PC-3 (cell line): ENCODE measurements at regions of chr14 and their contacts with region 1.

Region 1: GRCh38 chr14:61213191-61213621 is 67.9 kb downstream of the TMEM30B start:
- DNase-seq: peak; percentile 59
- ATAC-seq: no peak
- H3K4me3 ChIP-seq: no peak overlapping the region
- H3K27ac ChIP-seq: no peak overlapping the region
- H3K4me1 ChIP-seq: peaks cover 16% of the 10 kb centered on the region
- H3K27me3 ChIP-seq: no peaks in the 10 kb centered on the region
- CTCF ChIP-seq: no peak

Region 2: DNA sequence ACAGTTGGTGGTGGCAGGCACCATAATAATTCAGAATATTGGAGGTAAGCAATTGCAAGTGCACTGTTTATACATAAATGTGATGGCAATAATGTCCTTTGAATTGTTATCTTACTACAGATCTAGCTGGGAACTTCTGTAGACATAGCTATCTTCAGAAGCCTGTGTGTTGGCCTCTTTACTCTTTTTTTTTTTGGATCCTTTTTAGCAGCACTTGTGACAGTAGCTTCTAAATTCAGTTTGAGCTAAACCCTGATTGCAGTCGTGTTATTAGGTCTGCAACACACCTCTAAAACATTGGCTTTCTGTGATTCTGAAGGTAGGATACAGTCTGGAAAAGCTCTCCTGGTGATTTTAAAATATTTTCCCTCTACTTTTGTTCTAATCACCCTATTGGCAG is 193.7 kb before region 1 on chr14:
- CTCF ChIA-PET with region 1: interaction called, 12 read pairs
- POLR2A ChIA-PET with region 1: no interaction called
- intact Hi-C with region 1: no loop called
- DNase-seq: no peak
- ATAC-seq: no peak
- H3K4me3 ChIP-seq: no peak overlapping the region
- H3K27ac ChIP-seq: no peak overlapping the region
- H3K4me1 ChIP-seq: peaks cover 4% of the 10 kb centered on the region
- H3K27me3 ChIP-seq: no peaks in the 10 kb centered on the region
- CTCF ChIP-seq: no peak

Region 3: DNA sequence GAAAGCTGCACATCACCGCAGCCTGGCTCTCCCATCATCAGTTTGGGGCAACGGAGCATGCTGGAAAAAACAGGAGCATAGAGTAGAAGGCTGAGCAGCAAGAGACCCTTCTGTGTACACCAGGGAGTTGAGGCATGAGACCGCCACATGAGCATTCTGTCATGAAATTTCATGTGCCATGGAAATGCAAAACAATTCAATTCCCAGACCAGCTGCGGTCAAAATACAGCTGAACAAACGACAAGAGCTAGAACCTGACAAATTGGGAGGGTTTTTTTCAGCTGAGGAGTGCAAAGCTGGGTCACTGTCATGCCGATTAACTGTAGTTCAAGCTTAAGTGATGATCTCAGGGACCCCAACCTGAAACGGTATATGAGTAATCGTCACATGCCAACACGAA is 30.8 kb after region 1 on chr14:
- CTCF ChIA-PET with region 1: no interaction called
- POLR2A ChIA-PET with region 1: no interaction called
- intact Hi-C with region 1: no loop called
- DNase-seq: no peak
- ATAC-seq: no peak
- H3K4me3 ChIP-seq: no peak overlapping the region
- H3K27ac ChIP-seq: no peak overlapping the region
- H3K4me1 ChIP-seq: peaks cover 11% of the 10 kb centered on the region
- H3K27me3 ChIP-seq: no peaks in the 10 kb centered on the region
- CTCF ChIP-seq: no peak